ENCODE measurements at regions of chr12 and their contacts with region 1.

Region 1: GRCh38 chr12:114662512-114663177 is 21.3 kb downstream of the TBX3 start:
- DNase-seq: peak; percentile 73 to 92 (median 84)
- H3K4me3 ChIP-seq: no peak overlapping the region
- H3K27ac ChIP-seq: no peak overlapping the region
- H3K4me1 ChIP-seq: peaks cover 2% of the 10 kb centered on the region
- H3K27me3 ChIP-seq: no peaks in the 10 kb centered on the region
- CTCF ChIP-seq: peak; percentile 87 to 92 (median 92)
- EP300 ChIP-seq: no peak
- POLR2A ChIP-seq: no peak

Region 2: DNA sequence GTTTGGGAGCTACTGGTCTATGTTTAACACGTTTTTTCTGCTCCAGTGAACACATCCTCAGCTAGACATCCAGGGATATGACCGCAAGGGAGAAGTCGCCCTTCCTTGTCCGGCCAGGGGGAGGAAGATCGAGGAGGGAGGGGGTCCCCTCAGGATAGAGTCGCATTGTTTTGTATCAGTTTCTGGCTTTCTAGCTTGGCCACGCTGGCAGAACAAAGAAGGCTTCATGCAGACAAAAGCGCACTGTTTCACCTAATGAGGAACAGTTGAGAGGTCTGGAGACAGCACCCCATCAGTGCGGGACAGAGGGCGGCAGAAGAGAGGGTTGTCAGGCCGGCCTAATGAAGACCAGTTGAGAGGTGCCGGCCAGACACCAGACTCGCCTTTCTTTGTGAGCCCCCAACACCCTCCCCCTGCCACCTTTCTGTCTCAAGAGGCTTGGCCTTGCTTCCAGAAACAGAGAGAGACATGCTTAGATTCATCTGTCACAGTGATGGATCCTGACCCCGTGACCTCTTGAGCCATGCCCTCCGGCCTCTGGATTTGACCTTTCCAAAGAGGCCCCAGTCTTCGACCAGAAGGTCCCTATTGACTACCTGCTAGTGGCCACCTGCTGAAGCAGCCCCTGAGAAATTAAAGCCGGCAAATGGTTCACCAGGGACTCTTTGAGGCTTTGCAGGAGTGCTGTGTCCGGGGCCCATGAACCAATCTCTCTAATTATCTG is 276.0 kb after region 1 on chr12:
- intact Hi-C with region 1: no loop called
- DNase-seq: no peak
- H3K4me3 ChIP-seq: no peak overlapping the region
- H3K27ac ChIP-seq: no peak overlapping the region
- H3K4me1 ChIP-seq: no peaks in the 10 kb centered on the region
- H3K27me3 ChIP-seq: no peaks in the 10 kb centered on the region
- CTCF ChIP-seq: no peak
- EP300 ChIP-seq: no peak
- POLR2A ChIP-seq: no peak

Region 3: DNA sequence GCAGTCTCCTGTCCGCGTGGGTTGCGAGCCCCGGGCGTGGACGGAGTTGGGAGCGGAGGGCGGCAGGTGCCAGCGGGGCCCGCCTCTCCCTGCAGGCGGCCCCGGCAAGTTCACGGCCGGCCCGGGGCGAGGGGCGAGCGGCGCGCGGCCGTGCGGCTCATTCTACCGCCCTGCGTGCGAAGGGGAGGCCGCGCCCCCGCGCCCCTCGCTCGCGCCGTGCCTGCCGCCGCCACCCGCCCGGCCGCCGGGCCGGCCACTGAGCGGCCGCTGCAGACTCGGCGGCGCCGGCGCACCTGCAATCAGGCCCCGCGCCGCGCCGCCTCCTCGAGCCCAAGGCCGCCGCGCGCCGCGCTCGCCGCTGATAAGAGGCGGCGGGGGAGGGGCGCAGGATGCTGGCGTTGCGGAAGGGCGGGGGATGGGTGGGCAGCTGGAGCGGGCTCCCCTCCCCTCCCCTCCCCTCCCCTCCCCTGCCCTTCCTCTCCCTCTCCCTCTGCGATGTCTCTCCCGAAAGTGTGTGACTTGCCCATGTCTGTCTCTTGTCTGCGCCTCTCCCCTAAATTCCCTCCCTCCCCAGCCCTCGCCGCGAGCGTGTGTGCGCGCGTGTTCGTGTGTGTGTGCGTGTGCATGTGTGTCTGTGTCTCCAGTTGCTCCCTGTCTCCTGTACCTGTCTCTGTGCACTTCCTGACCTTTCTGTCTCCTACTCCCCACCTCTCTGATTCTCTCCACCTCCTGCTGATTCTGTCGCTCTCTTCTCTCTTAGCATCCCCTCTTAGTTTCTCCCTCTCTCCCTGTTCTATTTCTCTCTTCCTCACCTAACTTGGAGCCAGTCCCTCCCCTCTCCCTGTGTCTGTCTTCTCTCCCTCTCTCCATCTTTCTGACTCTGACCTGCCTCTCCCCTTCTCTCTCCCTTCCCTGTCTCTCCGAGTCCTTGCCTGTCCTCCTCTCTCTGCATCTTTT is 789.4 kb after region 1 on chr12:
- intact Hi-C with region 1: loop called in 1 of 4 experiments (anchors 10 kb)
- DNase-seq: peak; percentile 46 to 77 (median 65)
- H3K4me3 ChIP-seq: peak overlapping the region; percentile 31
- H3K27ac ChIP-seq: no peak overlapping the region
- H3K4me1 ChIP-seq: peaks cover 1% of the 10 kb centered on the region
- H3K27me3 ChIP-seq: no peaks in the 10 kb centered on the region
- CTCF ChIP-seq: no peak
- EP300 ChIP-seq: no peak
- POLR2A ChIP-seq: no peak

Region 4: DNA sequence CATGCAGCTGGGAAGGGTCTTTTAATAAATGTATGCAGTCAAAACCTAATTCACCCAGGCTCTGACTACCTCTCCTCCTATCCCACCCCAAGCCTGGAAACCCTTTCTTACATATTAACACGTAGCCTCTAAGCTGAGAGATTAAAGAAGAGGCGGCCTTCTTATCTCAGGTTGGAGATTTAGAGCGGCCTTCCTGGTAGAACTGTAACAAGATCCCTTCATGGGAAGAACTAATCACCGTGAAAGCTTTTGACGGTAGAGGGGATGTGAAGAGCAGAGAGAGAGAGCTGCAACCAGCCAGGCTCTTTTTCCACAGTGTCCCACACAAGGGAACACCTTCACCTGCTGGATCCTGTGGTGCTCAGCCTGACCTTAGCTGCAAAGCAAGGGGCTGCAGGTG is 1247.4 kb after region 1 on chr12:
- intact Hi-C with region 1: loop called in 3 of 4 experiments (anchors 5 kb)
- DNase-seq: no peak
- H3K4me3 ChIP-seq: no peak overlapping the region
- H3K27ac ChIP-seq: no peak overlapping the region
- H3K4me1 ChIP-seq: no peaks in the 10 kb centered on the region
- H3K27me3 ChIP-seq: no peaks in the 10 kb centered on the region
- CTCF ChIP-seq: no peak
- EP300 ChIP-seq: no peak
- POLR2A ChIP-seq: no peak

Measured in ovary (tissue), 10 donors.